MCF 10A (cell line): ENCODE measurements at regions of chr12 and their contacts with region 1.

Region 1: GRCh38 chr12:130041983-130042812 is 120.1 kb upstream of the FZD10 start:
- DNase-seq: peak; percentile 20
- H3K4me3 Mint-ChIP-seq: no peak overlapping the region
- H3K27ac Mint-ChIP-seq: no peak overlapping the region
- H3K4me1 Mint-ChIP-seq: no peaks in the 10 kb centered on the region
- H3K27me3 Mint-ChIP-seq: peaks cover 22% of the 10 kb centered on the region
- CTCF ChIP-seq: peak; percentile 63

Region 2: GRCh38 chr12:129701631-129702101 is 340.5 kb before region 1 on chr12:
- CTCF ChIA-PET with region 1: no interaction called
- POLR2A ChIA-PET with region 1: no interaction called
- intact Hi-C with region 1: no loop called
- DNase-seq: no peak
- H3K4me3 Mint-ChIP-seq: no peak overlapping the region
- H3K27ac Mint-ChIP-seq: no peak overlapping the region
- H3K4me1 Mint-ChIP-seq: no peaks in the 10 kb centered on the region
- H3K27me3 Mint-ChIP-seq: no peaks in the 10 kb centered on the region
- CTCF ChIP-seq: no peak

Region 3: DNA sequence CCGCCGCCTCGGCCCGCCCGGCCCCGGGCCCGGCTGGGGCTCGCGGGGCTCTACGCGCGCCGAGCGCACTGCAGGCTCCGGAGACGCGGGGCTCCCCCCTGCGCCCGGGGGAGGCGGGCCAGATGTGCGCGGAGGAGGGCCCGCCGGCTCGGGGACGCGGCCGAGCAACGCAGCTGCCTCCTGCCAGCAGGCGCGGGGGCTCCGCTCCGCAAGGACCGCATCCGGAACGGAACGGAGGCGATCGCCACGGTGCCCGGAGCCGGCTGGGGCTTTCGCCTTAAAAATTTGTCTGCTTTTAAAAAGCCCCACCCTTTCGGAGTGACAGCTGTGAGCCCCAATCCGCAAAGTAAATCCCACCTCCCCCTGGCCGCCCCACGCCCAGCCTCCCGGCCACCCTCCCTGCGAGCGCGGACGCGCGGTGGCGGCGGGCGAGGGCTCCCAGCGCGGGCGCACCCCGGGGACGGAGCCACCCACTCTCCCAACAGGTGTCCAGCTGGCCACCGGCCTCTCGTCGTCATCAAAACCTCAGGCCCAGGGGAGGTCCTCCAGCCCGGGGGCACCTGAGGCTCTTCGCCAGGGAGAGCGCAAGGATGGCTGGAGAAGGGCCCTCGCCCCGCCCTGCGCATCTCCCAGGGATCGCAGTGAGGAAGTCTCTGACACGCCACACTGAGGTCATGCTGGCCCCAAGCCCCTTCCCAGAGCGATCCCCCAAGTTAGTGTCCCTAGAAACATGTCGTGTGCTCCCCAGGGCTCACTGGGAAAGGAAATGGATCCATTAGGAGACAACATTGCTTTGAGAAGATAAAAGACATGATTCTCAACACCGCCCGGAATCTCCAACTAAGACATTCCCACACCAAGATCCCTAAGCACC is 138.0 kb before region 1 on chr12 and contains the start of gene TMEM132D:
- CTCF ChIA-PET with region 1: no interaction called
- POLR2A ChIA-PET with region 1: no interaction called
- intact Hi-C with region 1: no loop called
- DNase-seq: no peak
- H3K4me3 Mint-ChIP-seq: no peak within 1 kb of the TSS
- H3K27ac Mint-ChIP-seq: no peak within 1 kb of the TSS
- H3K4me1 Mint-ChIP-seq: no peaks in the 10 kb centered on the region
- H3K27me3 Mint-ChIP-seq: no peaks in the 10 kb centered on the region
- CTCF ChIP-seq: no peak
- total RNA-seq, gene TMEM132D: not detected in 2 replicates

Region 4: GRCh38 chr12:130031571-130032189 is 10.5 kb before region 1 on chr12:
- CTCF ChIA-PET with region 1: interaction called, 15 read pairs
- POLR2A ChIA-PET with region 1: interaction called, 3 read pairs
- intact Hi-C with region 1: no loop called
- DNase-seq: peak; percentile 58
- H3K4me3 Mint-ChIP-seq: no peak overlapping the region
- H3K27ac Mint-ChIP-seq: no peak overlapping the region
- H3K4me1 Mint-ChIP-seq: no peaks in the 10 kb centered on the region
- H3K27me3 Mint-ChIP-seq: peaks cover 40% of the 10 kb centered on the region
- CTCF ChIP-seq: peak; percentile 90

Region 5: DNA sequence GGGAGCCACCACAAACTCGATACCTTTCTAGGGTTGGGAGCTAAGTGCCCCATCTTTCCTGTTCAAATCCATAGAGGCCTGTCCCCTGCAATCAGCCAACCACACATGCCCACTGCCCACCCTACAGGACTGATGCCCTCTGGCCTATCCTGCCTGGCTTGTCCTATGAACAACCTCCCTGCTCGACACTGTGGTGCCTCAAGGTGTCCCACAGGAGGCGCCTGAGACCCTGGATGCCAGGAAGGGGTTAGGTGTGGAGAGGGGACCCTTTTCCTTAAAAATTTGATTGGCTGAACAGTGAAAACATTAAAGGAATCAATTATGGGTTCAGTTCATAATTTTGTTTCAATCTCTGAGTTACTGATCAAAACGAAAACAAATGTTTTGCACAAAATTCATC is 22.8 kb after region 1 on chr12:
- CTCF ChIA-PET with region 1: interaction called, 15 read pairs
- POLR2A ChIA-PET with region 1: no interaction called
- intact Hi-C with region 1: no loop called
- DNase-seq: peak; percentile 25
- H3K4me3 Mint-ChIP-seq: no peak overlapping the region
- H3K27ac Mint-ChIP-seq: no peak overlapping the region
- H3K4me1 Mint-ChIP-seq: no peaks in the 10 kb centered on the region
- H3K27me3 Mint-ChIP-seq: no peaks in the 10 kb centered on the region
- CTCF ChIP-seq: no peak

Region 6: DNA sequence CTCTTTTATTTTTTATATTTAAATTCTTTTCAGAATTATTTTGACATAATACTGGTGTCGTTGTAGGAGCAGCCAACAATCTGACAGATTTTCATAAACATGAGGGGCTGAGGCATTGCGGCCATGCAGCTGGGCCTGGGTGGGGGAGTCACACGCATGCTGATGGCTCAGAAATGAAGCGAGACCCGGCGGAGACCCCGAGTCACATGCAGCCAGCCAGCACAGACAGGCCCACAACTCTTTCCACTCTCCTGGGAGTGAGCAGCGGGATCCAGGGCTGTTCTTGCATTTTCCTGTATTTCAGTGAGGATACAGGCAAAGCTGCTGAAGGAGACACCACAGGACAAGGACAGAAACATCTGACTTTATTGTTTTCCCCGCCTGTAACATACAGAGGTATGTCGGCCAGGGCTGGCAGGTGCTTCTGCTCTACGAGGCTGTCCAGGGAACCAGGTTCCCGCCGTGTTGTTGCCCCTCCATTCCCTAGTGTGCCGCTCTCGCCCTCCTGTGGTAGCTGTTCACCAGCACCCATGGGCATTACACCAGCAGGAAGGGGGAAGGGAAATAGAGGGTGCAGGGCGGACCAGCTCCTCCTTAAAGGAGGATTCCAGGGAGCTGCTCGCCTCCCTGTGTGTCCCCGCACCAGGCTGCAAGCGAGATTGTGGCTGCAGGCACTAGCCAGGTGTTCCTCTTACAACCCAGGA is 150.6 kb after region 1 on chr12:
- CTCF ChIA-PET with region 1: no interaction called
- POLR2A ChIA-PET with region 1: no interaction called
- intact Hi-C with region 1: loop called (anchors 5 kb)
- DNase-seq: peak; percentile 22
- H3K4me3 Mint-ChIP-seq: no peak overlapping the region
- H3K27ac Mint-ChIP-seq: no peak overlapping the region
- H3K4me1 Mint-ChIP-seq: no peaks in the 10 kb centered on the region
- H3K27me3 Mint-ChIP-seq: no peaks in the 10 kb centered on the region
- CTCF ChIP-seq: peak; percentile 8

Region 7: GRCh38 chr12:130281153-130281799 is 239.1 kb after region 1 on chr12:
- CTCF ChIA-PET with region 1: interaction called, 6 read pairs
- POLR2A ChIA-PET with region 1: no interaction called
- intact Hi-C with region 1: loop called (anchors 5 kb)
- DNase-seq: peak; percentile 8
- H3K4me3 Mint-ChIP-seq: no peak overlapping the region
- H3K27ac Mint-ChIP-seq: no peak overlapping the region
- H3K4me1 Mint-ChIP-seq: no peaks in the 10 kb centered on the region
- H3K27me3 Mint-ChIP-seq: no peaks in the 10 kb centered on the region
- CTCF ChIP-seq: peak; percentile 65

Region 8: DNA sequence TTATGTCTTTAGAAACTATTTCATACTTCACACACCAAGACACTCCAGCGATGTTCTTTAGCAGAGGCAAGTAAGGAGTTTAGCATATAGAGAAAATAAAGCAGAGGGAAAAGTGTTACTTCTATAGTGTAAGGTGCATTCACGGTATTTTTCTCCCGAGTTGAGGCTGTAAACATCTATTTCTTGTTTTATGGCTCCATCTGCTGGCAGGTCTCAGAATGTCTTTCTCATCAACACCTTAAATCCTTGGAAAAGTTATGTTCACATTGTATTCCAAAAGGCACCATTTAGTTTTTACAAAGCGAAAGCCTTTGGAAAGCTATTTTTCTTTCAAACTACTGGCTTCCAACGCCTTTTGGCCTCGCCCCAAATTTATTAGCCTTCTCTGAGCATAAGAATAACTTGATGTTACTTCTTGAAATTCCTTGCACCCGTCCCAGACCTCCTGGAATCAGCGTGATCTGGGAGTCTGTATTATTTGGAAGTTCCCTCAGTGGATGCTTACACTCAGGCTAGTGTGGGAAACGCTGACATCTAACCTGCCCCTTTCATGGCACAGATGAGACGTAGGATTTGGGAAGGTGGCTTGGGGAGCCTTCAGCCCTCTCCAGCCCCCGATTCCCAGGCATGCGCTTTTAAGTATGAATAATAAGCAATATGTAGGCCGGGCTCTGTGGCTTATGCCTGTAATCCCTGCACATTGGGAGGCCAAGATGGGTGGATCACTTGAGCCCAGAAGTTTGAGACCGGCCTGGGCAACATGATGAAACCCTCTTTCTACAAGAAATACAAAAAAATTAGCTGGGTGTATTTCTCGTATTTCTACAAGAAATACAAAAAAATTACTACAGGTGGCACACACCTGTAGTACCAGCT is 293.6 kb after region 1 on chr12:
- CTCF ChIA-PET with region 1: interaction called, 61 read pairs
- POLR2A ChIA-PET with region 1: no interaction called
- intact Hi-C with region 1: loop called (anchors 1 kb)
- DNase-seq: peak; percentile 60
- H3K4me3 Mint-ChIP-seq: no peak overlapping the region
- H3K27ac Mint-ChIP-seq: no peak overlapping the region
- H3K4me1 Mint-ChIP-seq: peaks cover 18% of the 10 kb centered on the region
- H3K27me3 Mint-ChIP-seq: peaks cover 12% of the 10 kb centered on the region
- CTCF ChIP-seq: peak; percentile 71